ENCODE measurements at regions of chr9 and their contacts with region 1.

Region 1: GRCh38 chr9:4740638-4741364 is at the start of gene AK3:
- DNase-seq: peak; percentile 43
- H3K4me3 ChIP-seq: peak within 1 kb of the TSS; percentile 82 to 97 (median 90)
- H3K27ac ChIP-seq: peak within 1 kb of the TSS; percentile 92 to 99 (median 98)
- H3K4me1 ChIP-seq: peaks cover 9 to 64% (median 11%) of the 10 kb centered on the region in 3 donors
- H3K27me3 ChIP-seq: no peaks in the 10 kb centered on the region
- CTCF ChIP-seq: peak in 3 of 6 experiments; percentile 7 to 21 (median 12)
- POLR2A ChIP-seq: peak in 2 of 4 donors; percentile 91 to 94
- total RNA-seq, gene AK3: 47.8 to 104 (median 81.2) TPM

Region 2: GRCh38 chr9:4666042-4666699 is 74.6 kb before region 1 on chr9 and contains the start of gene SPATA6L:
- intact Hi-C with region 1: loop called (anchors 5 kb)
- DNase-seq: no peak
- H3K4me3 ChIP-seq: peak within 1 kb of the TSS; percentile 39 to 71 (median 53)
- H3K27ac ChIP-seq: peak within 1 kb of the TSS; percentile 75 to 78 (median 77)
- H3K4me1 ChIP-seq: peaks cover 0 to 55% (median 32%) of the 10 kb centered on the region in 3 donors
- H3K27me3 ChIP-seq: no peaks in the 10 kb centered on the region
- CTCF ChIP-seq: no peak
- POLR2A ChIP-seq: peak in 1 of 4 donors; percentile 34
- total RNA-seq, gene SPATA6L: 0.91 to 3.0 (median 1.8) TPM

Region 3: DNA sequence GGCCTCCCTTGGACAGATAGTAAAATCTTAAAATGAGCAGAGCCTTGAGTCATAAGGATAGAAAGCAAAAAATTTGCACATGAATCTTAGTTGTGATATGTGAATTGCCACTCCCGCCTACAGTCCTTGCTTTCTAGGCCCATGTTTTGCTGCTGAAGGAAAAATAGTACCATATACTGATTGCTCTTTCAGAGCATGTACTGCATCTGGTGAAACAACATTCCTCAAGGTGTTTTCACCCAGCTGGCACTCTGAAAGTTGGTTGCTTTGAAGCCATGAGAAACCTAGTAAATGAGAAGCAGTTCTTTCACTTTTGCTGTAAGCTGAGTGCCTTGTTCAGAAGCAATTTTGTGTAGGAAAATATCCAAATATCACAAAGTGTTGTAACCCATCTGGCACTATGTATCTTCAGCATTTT is 51.1 kb before region 1 on chr9:
- intact Hi-C with region 1: no loop called
- DNase-seq: no peak
- H3K4me3 ChIP-seq: no peak overlapping the region
- H3K27ac ChIP-seq: peak overlapping the region in 3 of 4 donors; percentile 5 to 47 (median 8)
- H3K4me1 ChIP-seq: peaks cover 0 to 53% (median 0%) of the 10 kb centered on the region in 3 donors
- H3K27me3 ChIP-seq: no peaks in the 10 kb centered on the region
- CTCF ChIP-seq: no peak
- POLR2A ChIP-seq: no peak

Measured in esophagus squamous epithelium (tissue), 5 donors.